ENCODE measurements at regions of chr7 and their contacts with region 1.

Region 1: DNA sequence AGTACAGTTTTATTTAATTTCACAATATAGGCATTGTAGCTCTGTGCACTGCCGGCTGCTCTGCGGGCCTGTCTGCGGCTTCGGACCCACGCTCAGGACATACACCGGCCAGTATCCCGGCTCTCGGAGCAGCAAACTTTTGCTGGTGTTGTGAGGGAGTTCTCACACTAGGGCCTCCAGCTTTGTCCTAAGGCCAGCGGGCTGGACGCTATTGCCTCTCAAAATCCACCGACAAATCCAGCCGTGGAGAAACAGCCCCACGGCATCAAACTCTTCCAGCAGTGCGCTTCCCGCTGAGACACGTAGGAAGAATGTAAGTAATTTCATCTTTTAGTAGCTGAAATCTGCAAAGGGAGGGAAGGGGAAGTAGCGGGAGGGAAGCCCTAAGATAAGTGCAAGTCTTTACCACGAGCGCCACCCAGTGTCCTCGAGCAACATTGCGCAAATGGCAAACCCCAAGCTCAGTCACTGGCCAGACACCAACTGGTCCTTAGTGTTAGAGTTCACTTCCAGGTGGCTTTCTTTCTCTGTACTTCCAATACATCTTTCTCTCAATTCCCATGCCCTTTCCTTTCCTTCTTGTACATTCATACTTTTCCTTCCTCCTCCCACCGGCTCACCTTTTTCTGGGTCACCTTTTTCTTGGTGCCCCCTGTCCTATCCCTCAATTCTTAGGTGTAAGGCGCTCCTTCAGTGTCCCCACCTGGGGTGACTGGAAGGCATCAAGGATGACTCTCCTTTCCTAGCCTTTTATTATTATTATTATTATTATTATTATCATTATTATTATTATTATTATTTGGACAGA is 3.0 kb upstream of the DLX5 start:
- DNase-seq: peak; percentile 48
- H3K4me3 Mint-ChIP-seq: peak overlapping the region; percentile 63
- H3K27ac Mint-ChIP-seq: no peak overlapping the region
- H3K4me1 Mint-ChIP-seq: peaks cover 16% of the 10 kb centered on the region
- H3K27me3 Mint-ChIP-seq: peaks cover 64% of the 10 kb centered on the region

Region 2: DNA sequence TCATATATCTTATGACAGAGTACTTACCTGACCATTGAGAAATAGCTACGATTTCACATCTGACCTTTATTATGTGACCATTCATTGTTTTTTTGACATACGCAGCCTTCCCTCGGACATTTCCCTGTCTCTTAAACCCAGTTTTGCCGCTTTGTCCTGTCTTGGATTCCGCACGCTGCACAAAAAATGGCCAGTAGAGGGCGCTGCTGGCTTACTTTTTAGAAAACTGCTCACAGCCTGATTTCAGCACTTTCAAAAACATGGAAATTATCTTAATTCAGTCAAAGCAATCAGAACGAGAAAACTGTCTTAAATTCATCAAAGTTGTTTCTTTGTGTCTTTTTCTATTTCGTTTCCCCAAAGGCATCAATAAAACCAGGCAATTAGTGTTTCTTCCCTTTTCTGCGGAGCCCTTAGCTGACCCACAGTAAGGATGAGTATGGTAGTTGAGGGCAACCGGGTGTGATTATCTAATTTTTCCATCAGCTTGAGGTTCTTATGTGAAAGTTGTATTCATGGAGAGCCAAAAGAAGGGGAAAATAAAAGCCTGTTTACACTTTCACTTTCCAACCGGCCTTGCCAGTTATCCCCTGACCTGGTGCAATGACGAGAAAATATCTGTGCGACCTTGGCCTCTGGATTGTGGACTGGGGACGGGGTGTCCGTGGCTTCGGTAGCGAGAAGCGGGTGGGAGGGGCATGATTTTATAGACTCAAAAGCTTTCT is 1110.9 kb before region 1 on chr7:
- intact Hi-C with region 1: loop called (anchors 1 kb)
- DNase-seq: peak; percentile 49
- H3K4me3 Mint-ChIP-seq: no peak overlapping the region
- H3K27ac Mint-ChIP-seq: no peak overlapping the region
- H3K4me1 Mint-ChIP-seq: peaks cover 10% of the 10 kb centered on the region
- H3K27me3 Mint-ChIP-seq: peaks cover 12% of the 10 kb centered on the region

Region 3: DNA sequence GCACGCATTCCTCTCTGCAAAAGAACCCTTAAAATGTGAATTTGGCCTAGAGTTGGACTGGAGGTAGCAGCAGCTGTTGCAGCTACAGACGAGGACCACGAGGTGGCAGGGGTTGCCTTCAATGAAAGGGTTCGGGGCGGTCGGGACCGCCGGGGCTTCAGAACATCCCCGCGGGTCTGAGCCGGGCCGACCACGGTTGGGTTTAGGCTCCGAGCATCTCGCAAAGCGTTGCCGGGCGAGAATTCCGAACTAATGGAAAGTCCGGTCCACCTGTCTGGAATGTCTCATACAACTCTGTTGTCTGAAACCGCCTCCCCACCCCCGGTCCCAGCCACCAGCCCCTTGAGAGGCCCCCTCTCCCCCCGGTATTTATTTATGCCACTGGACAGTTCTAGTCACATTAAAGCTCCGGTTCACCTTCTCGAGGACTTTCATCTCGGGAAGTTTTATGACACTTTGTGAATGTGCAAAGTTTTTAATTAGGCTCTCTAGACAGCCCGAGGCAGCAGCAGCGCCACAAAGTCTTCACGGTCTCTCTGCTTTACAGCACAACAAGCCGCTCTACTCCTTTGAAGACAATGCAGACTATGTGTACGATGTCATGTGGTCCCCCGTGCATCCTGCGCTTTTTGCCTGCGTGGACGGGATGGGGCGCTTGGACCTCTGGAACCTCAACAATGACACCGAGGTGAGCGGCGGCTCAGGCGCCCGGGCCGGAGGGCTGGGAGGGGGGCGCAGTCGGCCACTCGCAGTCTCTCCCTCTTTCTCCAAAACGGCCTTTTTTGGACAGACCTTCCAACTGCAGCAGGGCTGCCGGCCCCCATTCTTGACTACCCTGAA is 951.9 kb before region 1 on chr7:
- intact Hi-C with region 1: loop called (anchors 1 kb)
- DNase-seq: peak; percentile 20
- H3K4me3 Mint-ChIP-seq: peak overlapping the region; percentile 77
- H3K27ac Mint-ChIP-seq: no peak overlapping the region
- H3K4me1 Mint-ChIP-seq: peaks cover 4% of the 10 kb centered on the region
- H3K27me3 Mint-ChIP-seq: peaks cover 46% of the 10 kb centered on the region

Region 4: DNA sequence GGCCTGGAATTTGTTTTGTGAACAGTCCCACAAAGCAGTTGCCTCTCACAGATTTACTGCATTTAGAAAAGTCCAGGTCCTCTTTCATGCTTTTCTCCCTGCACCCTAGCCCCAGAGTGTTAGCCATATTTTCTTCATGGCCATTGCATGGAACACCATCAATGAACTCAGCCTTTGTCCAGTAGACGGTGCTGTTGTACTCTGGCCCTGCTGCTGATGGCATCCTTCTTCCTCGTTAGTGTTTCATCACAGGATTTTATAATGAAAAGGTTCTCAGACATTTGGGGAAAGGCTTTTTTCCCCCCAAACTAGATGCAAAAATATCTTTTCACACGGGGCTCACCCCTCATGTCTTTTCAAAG is 612.7 kb before region 1 on chr7:
- intact Hi-C with region 1: loop called (anchors 1 kb)
- DNase-seq: peak; percentile 35
- H3K4me3 Mint-ChIP-seq: no peak overlapping the region
- H3K27ac Mint-ChIP-seq: no peak overlapping the region
- H3K4me1 Mint-ChIP-seq: peaks cover 2% of the 10 kb centered on the region
- H3K27me3 Mint-ChIP-seq: peaks cover 18% of the 10 kb centered on the region

Region 5: DNA sequence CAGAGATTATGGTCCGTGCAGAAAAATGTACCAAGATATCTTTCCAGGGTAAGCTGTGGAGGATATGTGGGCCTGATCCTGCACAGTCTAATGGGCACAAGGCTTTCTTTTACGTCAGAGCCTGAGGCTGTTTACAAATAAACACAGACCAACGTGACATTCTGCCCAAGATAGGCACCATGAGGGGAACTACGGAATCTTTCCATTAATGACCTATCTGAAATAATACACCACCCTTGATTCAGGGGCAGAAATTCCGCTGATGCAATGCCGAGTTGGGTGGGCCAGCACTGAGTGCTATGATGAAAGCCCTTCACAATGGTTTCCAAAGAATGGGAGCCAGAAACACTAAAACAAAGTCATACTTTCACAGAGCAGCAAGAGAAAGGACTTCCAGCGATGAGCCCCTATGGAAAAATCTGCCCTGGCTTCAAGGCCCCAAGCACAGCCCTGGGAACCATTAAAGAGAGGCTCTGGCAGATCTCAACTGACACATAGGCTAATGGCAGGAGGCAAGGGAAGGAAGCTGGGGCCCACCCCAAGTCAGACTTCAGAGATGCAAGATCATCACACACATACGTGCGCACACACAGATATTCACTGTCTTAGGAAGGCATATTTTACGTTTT is 94.5 kb before region 1 on chr7:
- intact Hi-C with region 1: no loop called
- DNase-seq: no peak
- H3K4me3 Mint-ChIP-seq: no peak overlapping the region
- H3K27ac Mint-ChIP-seq: no peak overlapping the region
- H3K4me1 Mint-ChIP-seq: no peaks in the 10 kb centered on the region
- H3K27me3 Mint-ChIP-seq: peaks cover 2% of the 10 kb centered on the region

Region 6: DNA sequence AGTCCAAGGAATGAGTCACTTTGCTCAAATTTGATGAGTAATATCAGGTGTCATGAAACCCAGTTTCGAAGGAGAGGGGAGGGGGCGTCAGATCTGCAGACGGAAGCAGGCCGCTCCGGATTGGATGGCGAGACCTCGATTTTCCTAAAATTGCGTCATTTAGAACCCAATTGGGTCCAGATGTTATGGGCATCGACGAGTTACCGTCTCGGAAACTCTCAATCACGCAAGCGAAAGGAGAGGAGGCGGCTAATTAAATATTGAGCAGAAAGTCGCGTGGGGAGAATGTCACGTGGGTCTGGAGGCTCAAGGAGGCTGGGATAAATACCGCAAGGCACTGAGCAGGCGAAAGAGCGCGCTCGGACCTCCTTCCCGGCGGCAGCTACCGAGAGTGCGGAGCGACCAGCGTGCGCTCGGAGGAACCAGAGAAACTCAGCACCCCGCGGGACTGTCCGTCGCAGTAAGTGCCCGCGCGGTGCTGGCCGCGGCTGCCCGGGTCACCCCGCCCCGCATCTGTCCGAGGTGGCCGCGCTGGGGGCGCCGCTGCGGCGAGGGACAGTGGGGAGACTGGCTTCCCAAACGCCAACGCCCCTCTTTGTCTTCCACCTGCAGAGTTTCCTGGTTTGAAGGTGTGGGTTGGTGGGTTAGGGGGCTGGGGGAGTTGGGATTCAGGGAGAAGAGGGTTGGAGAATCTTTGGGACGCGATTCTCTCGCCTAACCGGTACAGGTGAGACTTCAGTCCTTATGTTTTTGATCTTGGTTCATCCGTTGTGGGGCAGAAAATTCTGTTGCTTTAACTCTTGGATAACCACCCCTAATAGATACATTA is 704.3 kb after region 1 on chr7 and contains the start of gene TAC1:
- intact Hi-C with region 1: loop called (anchors 2 kb)
- DNase-seq: no peak
- H3K4me3 Mint-ChIP-seq: no peak within 1 kb of the TSS
- H3K27ac Mint-ChIP-seq: no peak within 1 kb of the TSS
- H3K4me1 Mint-ChIP-seq: peaks cover 4% of the 10 kb centered on the region
- H3K27me3 Mint-ChIP-seq: peaks cover 57% of the 10 kb centered on the region
- total RNA-seq, gene TAC1: 1.8 and 2.0 TPM in 2 replicates

Region 7: GRCh38 chr7:98617051-98617959 is 1589.7 kb after region 1 on chr7 and contains the start of gene NPTX2:
- intact Hi-C with region 1: loop called (anchors 10 kb)
- DNase-seq: no peak
- H3K4me3 Mint-ChIP-seq: no peak within 1 kb of the TSS
- H3K27ac Mint-ChIP-seq: no peak within 1 kb of the TSS
- H3K4me1 Mint-ChIP-seq: no peaks in the 10 kb centered on the region
- H3K27me3 Mint-ChIP-seq: peaks cover 38% of the 10 kb centered on the region
- total RNA-seq, gene NPTX2: 0.28 and 0.32 TPM in 2 replicates